Mammary epithelial cell (primary cell): ENCODE measurements at regions of chr10 and their contacts with region 1.

Region 1: GRCh38 chr10:124152916-124153826 is 59.8 kb upstream of the CHST15 start:
- DNase-seq: peak; percentile 98
- H3K4me3 ChIP-seq: no peak overlapping the region
- H3K27ac ChIP-seq: peak overlapping the region; percentile 65
- H3K4me1 ChIP-seq: peaks cover 32% of the 10 kb centered on the region
- H3K27me3 ChIP-seq: no peaks in the 10 kb centered on the region
- CTCF ChIP-seq: no peak

Region 2: DNA sequence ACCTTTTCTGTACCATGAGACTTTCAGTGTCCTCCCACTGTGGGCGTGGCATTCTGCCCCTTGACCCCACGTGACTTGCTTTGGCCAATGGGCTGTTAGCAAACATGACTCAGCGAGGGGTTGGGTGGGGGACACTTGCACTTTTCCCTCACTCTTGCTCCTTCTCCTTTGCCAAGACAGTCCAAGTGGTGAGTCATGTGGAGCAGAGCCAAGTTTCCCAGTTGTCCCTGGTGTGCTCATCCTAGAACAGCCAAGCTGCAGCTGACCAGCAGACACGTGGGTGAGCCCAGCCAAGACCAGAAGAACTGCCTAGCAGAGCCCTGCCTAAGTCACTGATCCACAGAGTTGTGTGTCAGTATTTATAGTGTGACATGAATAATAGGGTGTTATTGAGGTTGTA is 178.8 kb before region 1 on chr10:
- CTCF ChIA-PET with region 1: no interaction called
- dilution Hi-C with region 1: no loop called
- in situ Hi-C with region 1: no loop called
- intact Hi-C with region 1: no loop called
- DNase-seq: peak; percentile 59
- H3K4me3 ChIP-seq: no peak overlapping the region
- H3K27ac ChIP-seq: no peak overlapping the region
- H3K4me1 ChIP-seq: no peaks in the 10 kb centered on the region
- H3K27me3 ChIP-seq: peaks cover 15% of the 10 kb centered on the region
- CTCF ChIP-seq: no peak

Region 3: GRCh38 chr10:124106241-124106879 is 46.8 kb before region 1 on chr10:
- CTCF ChIA-PET with region 1: no interaction called
- dilution Hi-C with region 1: no loop called
- in situ Hi-C with region 1: no loop called
- intact Hi-C with region 1: loop called (anchors 1 kb)
- DNase-seq: peak; percentile 92
- H3K4me3 ChIP-seq: peak overlapping the region in 1 of 3 experiments; percentile 22
- H3K27ac ChIP-seq: peak overlapping the region; percentile 65
- H3K4me1 ChIP-seq: peaks cover 23% of the 10 kb centered on the region
- H3K27me3 ChIP-seq: no peaks in the 10 kb centered on the region
- CTCF ChIP-seq: no peak

Region 4: DNA sequence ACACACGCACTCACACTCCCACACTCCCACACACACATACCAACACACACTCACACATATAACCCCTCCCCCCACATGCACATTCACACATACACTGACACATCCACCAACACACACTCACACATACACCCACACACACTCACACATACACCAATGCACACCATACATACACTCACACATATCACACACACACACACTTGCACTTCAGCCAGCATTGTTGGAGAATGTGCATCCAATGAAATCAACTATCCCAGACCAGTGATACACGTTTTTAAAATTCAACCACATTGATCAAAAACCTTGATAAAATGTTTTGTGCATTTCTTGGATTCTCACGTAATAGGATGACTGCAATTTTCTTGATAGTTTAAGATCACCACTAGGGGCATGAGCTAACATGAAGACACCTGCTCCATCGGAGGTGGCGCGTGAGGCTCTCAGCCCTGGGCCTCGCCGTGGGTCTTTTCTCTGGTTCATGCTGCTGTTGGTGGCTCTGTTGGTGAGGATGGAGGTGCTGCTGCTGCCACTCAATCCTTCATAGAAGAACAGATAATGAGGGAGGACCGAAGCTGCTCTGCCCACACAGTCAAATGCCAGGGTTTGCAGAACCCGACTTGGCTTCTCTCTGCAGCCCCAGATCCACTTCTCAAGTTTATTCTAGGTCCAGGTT is 27.6 kb before region 1 on chr10:
- CTCF ChIA-PET with region 1: no interaction called
- dilution Hi-C with region 1: no loop called
- in situ Hi-C with region 1: no loop called
- intact Hi-C with region 1: loop called (anchors 1 kb)
- DNase-seq: peak; percentile 57
- H3K4me3 ChIP-seq: no peak overlapping the region
- H3K27ac ChIP-seq: no peak overlapping the region
- H3K4me1 ChIP-seq: peaks cover 4% of the 10 kb centered on the region
- H3K27me3 ChIP-seq: no peaks in the 10 kb centered on the region
- CTCF ChIP-seq: peak; percentile 47 to 59

Region 5: GRCh38 chr10:124185084-124185483 is 31.9 kb after region 1 on chr10:
- CTCF ChIA-PET with region 1: no interaction called
- dilution Hi-C with region 1: no loop called
- in situ Hi-C with region 1: no loop called
- intact Hi-C with region 1: loop called (anchors 2 kb)
- DNase-seq: peak; percentile 77
- H3K4me3 ChIP-seq: no peak overlapping the region
- H3K27ac ChIP-seq: peak overlapping the region; percentile 64
- H3K4me1 ChIP-seq: peaks cover 26% of the 10 kb centered on the region
- H3K27me3 ChIP-seq: no peaks in the 10 kb centered on the region
- CTCF ChIP-seq: no peak

Region 6: GRCh38 chr10:124388823-124389612 is 235.8 kb after region 1 on chr10:
- CTCF ChIA-PET with region 1: no interaction called
- dilution Hi-C with region 1: no loop called
- in situ Hi-C with region 1: no loop called
- intact Hi-C with region 1: loop called (anchors 5 kb)
- DNase-seq: peak; percentile 72
- H3K4me3 ChIP-seq: peak overlapping the region; percentile 14 to 33 (median 17)
- H3K27ac ChIP-seq: no peak overlapping the region
- H3K4me1 ChIP-seq: peaks cover 13% of the 10 kb centered on the region
- H3K27me3 ChIP-seq: no peaks in the 10 kb centered on the region
- CTCF ChIP-seq: peak; percentile 62 to 91